CD4-positive, alpha-beta memory T cell (primary cell): ENCODE measurements at regions of chr1 and their contacts with region 1.

Region 1: GRCh38 chr1:223748773-223749733 is 36.7 kb downstream of the CAPN2 start:
- DNase-seq: peak; percentile 57 to 77 (median 71)
- H3K4me3 ChIP-seq: peak overlapping the region in 1 of 2 donors; percentile 51
- H3K4me3 Mint-ChIP-seq: peak overlapping the region; percentile 58 to 82 (median 76)
- H3K27ac ChIP-seq: peak overlapping the region; percentile 28
- H3K27ac Mint-ChIP-seq: peak overlapping the region in 6 of 7 donors; percentile 67 to 89 (median 76)
- H3K4me1 ChIP-seq: peaks cover 16% of the 10 kb centered on the region
- H3K4me1 Mint-ChIP-seq: peaks cover 6 to 28% (median 21%) of the 10 kb centered on the region in 4 donors
- H3K27me3 ChIP-seq: no peaks in the 10 kb centered on the region
- H3K27me3 Mint-ChIP-seq: no peaks in the 10 kb centered on the region

Region 2: DNA sequence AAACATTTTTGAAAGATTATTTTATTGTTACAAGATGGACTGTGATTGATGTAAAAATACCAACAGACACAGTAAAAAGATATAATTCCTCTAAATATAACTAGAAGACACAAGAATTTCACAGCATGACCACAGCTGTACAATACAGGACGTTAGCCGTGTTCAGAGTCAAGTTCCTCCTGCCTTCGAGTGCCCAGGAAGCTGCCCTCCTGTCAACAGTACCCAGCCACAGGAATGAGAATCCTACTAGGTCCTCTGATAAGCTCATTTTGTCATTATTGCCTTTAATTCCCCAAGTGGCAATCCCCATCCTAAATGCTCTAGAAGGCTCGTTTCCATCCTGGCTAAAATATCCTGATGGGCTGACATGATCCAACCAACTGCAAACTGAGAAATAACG is 53.1 kb before region 1 on chr1:
- CTCF ChIA-PET with region 1: interaction called, 120 read pairs
- POLR2A ChIA-PET with region 1: interaction called, 22 read pairs
- intact Hi-C with region 1: loop called (anchors 1 kb)
- DNase-seq: no peak
- H3K4me3 ChIP-seq: no peak overlapping the region
- H3K4me3 Mint-ChIP-seq: no peak overlapping the region
- H3K27ac ChIP-seq: no peak overlapping the region
- H3K27ac Mint-ChIP-seq: no peak overlapping the region
- H3K4me1 ChIP-seq: peaks cover 7% of the 10 kb centered on the region
- H3K4me1 Mint-ChIP-seq: peaks cover 4 to 13% (median 5%) of the 10 kb centered on the region in 4 donors
- H3K27me3 ChIP-seq: no peaks in the 10 kb centered on the region
- H3K27me3 Mint-ChIP-seq: peaks cover 2 to 5% of the 10 kb centered on the region in 2 donors

Region 3: GRCh38 chr1:223712194-223712849 is 36.7 kb before region 1 on chr1 and contains the start of gene CAPN2:
- CTCF ChIA-PET with region 1: interaction called, 233 read pairs
- POLR2A ChIA-PET with region 1: interaction called, 71 read pairs
- intact Hi-C with region 1: loop called (anchors 1 kb)
- DNase-seq: peak; percentile 54 to 67 (median 62)
- H3K4me3 ChIP-seq: peak within 1 kb of the TSS; percentile 53 to 74
- H3K4me3 Mint-ChIP-seq: peak within 1 kb of the TSS; percentile 86 to 95 (median 88)
- H3K27ac ChIP-seq: peak within 1 kb of the TSS; percentile 79
- H3K27ac Mint-ChIP-seq: peak within 1 kb of the TSS; percentile 91 to 98 (median 94)
- H3K4me1 ChIP-seq: peaks cover 61% of the 10 kb centered on the region
- H3K4me1 Mint-ChIP-seq: peaks cover 50 to 75% (median 58%) of the 10 kb centered on the region in 4 donors
- H3K27me3 ChIP-seq: no peaks in the 10 kb centered on the region
- H3K27me3 Mint-ChIP-seq: no peaks in the 10 kb centered on the region
- total RNA-seq, gene CAPN2: 178 to 180 TPM

Region 4: DNA sequence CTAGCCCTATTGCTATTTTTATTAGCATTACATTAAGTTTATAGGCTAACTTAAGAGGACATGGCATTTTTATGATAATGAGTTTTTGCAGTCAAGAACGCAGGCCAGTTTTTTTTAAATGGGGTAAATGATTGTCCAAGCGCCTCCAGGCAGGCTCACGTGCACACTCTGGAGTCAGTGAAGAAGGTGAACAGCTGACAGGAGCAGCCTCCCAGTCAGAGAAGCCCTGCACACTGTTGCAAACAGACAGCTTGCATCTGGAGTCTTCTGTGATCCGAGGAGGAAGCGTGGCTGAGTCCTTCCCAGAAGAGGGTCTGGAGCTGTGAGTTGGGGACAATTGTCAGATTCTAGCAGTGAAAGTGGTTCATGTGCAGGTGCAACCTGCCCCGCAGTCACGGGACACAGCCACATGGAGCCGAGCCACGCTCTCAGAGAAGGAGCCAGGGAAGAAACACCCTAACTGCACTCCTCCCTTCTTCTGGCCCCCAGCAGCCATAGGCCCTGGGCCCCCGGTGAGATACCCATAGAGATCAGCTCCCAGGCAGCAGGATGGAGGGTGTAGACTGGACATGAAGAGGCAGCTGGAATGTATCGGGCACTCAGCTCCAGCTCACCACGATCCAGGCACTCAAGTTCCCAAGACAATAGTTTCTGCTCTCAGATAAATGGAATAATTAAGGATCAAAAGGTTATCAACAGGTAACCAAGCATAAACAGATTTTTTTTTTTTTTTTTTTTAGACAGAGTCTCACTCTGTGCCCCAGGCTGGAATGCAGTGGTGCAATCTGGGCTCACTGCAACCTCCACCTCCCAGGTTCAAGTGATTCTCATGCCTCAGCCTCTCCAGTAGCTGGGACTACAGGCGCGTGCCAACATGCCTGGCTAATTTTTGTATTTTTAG is 10.3 kb before region 1 on chr1:
- CTCF ChIA-PET with region 1: interaction called, 15 read pairs
- POLR2A ChIA-PET with region 1: no interaction called
- intact Hi-C with region 1: no loop called
- DNase-seq: no peak
- H3K4me3 ChIP-seq: no peak overlapping the region
- H3K4me3 Mint-ChIP-seq: no peak overlapping the region
- H3K27ac ChIP-seq: no peak overlapping the region
- H3K27ac Mint-ChIP-seq: peak overlapping the region; percentile 29 to 89 (median 78)
- H3K4me1 ChIP-seq: peaks cover 10% of the 10 kb centered on the region
- H3K4me1 Mint-ChIP-seq: peaks cover 7 to 42% (median 19%) of the 10 kb centered on the region in 4 donors
- H3K27me3 ChIP-seq: no peaks in the 10 kb centered on the region
- H3K27me3 Mint-ChIP-seq: no peaks in the 10 kb centered on the region

Region 5: GRCh38 chr1:223845810-223846682 is 97.0 kb after region 1 on chr1 and contains the start of gene TP53BP2:
- CTCF ChIA-PET with region 1: interaction called, 12 read pairs
- POLR2A ChIA-PET with region 1: interaction called, 5 read pairs
- intact Hi-C with region 1: no loop called
- DNase-seq: peak; percentile 89 to 92 (median 91)
- H3K4me3 ChIP-seq: peak within 1 kb of the TSS; percentile 74 to 84
- H3K4me3 Mint-ChIP-seq: peak within 1 kb of the TSS; percentile 94 to 98 (median 95)
- H3K27ac ChIP-seq: peak within 1 kb of the TSS; percentile 98
- H3K27ac Mint-ChIP-seq: peak within 1 kb of the TSS; percentile 97 to 100 (median 98)
- H3K4me1 ChIP-seq: peaks cover 52% of the 10 kb centered on the region
- H3K4me1 Mint-ChIP-seq: peaks cover 31 to 51% (median 35%) of the 10 kb centered on the region in 4 donors
- H3K27me3 ChIP-seq: no peaks in the 10 kb centered on the region
- H3K27me3 Mint-ChIP-seq: no peaks in the 10 kb centered on the region
- total RNA-seq, gene TP53BP2: 48.3 to 49.8 TPM